Endothelial cell of umbilical vein (primary cell): ENCODE measurements at regions of chr7 and their contacts with region 1.

Region 1: GRCh38 chr7:128209229-128210035 is 31.6 kb upstream of the LEP start:
- DNase-seq: peak; percentile 77
- H3K4me3 ChIP-seq: no peak overlapping the region
- H3K27ac ChIP-seq: no peak overlapping the region
- H3K4me1 ChIP-seq: no peaks in the 10 kb centered on the region
- H3K27me3 ChIP-seq: peaks cover 10 to 24% of the 10 kb centered on the region in 2 experiments
- CTCF ChIP-seq: peak; percentile 93 to 97
- POLR2A ChIP-seq: no peak

Region 2: GRCh38 chr7:126803060-126803665 is 1406.3 kb before region 1 on chr7:
- CTCF ChIA-PET with region 1: interaction called, 17 read pairs
- POLR2A ChIA-PET with region 1: no interaction called
- dilution Hi-C with region 1: no loop called
- intact Hi-C with region 1: loop called (anchors 5 kb)
- DNase-seq: peak; percentile 65
- H3K4me3 ChIP-seq: no peak overlapping the region
- H3K27ac ChIP-seq: no peak overlapping the region
- H3K4me1 ChIP-seq: no peaks in the 10 kb centered on the region
- H3K27me3 ChIP-seq: no peaks in the 10 kb centered on the region
- CTCF ChIP-seq: peak; percentile 43
- POLR2A ChIP-seq: no peak

Region 3: DNA sequence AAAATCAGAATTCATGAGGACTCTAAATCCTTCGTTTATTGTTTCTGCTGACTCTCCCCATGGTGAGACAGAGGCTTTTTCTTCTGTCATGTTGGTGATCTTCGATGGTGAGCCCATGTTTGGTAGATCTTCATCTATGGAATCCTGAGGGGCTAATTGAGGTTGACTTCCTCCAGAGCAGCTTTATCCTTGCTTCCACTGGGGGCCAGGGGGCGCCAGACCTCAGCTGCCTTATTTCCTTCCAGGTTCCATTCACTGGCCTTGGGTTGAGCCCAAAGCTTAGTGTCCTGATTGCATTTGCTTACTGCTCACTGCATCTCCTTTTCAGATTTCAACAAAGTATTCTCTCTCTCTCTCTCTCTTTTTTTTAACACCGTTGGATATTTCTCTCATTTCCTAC is 704.7 kb before region 1 on chr7:
- CTCF ChIA-PET with region 1: interaction called, 91 read pairs
- POLR2A ChIA-PET with region 1: no interaction called
- dilution Hi-C with region 1: no loop called
- intact Hi-C with region 1: no loop called
- DNase-seq: peak; percentile 11
- H3K4me3 ChIP-seq: no peak overlapping the region
- H3K27ac ChIP-seq: no peak overlapping the region
- H3K4me1 ChIP-seq: no peaks in the 10 kb centered on the region
- H3K27me3 ChIP-seq: peaks cover 1 to 4% of the 10 kb centered on the region in 2 experiments
- CTCF ChIP-seq: peak; percentile 49 to 54
- POLR2A ChIP-seq: no peak

Region 4: GRCh38 chr7:127629268-127629854 is 580.1 kb before region 1 on chr7:
- CTCF ChIA-PET with region 1: interaction called, 10 read pairs
- POLR2A ChIA-PET with region 1: no interaction called
- dilution Hi-C with region 1: no loop called
- intact Hi-C with region 1: no loop called
- DNase-seq: no peak
- H3K4me3 ChIP-seq: no peak overlapping the region
- H3K27ac ChIP-seq: no peak overlapping the region
- H3K4me1 ChIP-seq: no peaks in the 10 kb centered on the region
- H3K27me3 ChIP-seq: peaks cover 6 to 19% of the 10 kb centered on the region in 2 experiments
- CTCF ChIP-seq: peak; percentile 26 to 36
- POLR2A ChIP-seq: no peak

Region 5: GRCh38 chr7:128031901-128032604 is 177.4 kb before region 1 on chr7:
- CTCF ChIA-PET with region 1: interaction called, 60 read pairs
- POLR2A ChIA-PET with region 1: no interaction called
- dilution Hi-C with region 1: no loop called
- intact Hi-C with region 1: loop called (anchors 1 kb)
- DNase-seq: peak; percentile 85
- H3K4me3 ChIP-seq: peak overlapping the region in 2 of 3 experiments; percentile 8 to 45
- H3K27ac ChIP-seq: no peak overlapping the region
- H3K4me1 ChIP-seq: peaks cover 6% of the 10 kb centered on the region
- H3K27me3 ChIP-seq: no peaks in the 10 kb centered on the region
- CTCF ChIP-seq: peak; percentile 16 to 37
- POLR2A ChIP-seq: no peak

Region 6: DNA sequence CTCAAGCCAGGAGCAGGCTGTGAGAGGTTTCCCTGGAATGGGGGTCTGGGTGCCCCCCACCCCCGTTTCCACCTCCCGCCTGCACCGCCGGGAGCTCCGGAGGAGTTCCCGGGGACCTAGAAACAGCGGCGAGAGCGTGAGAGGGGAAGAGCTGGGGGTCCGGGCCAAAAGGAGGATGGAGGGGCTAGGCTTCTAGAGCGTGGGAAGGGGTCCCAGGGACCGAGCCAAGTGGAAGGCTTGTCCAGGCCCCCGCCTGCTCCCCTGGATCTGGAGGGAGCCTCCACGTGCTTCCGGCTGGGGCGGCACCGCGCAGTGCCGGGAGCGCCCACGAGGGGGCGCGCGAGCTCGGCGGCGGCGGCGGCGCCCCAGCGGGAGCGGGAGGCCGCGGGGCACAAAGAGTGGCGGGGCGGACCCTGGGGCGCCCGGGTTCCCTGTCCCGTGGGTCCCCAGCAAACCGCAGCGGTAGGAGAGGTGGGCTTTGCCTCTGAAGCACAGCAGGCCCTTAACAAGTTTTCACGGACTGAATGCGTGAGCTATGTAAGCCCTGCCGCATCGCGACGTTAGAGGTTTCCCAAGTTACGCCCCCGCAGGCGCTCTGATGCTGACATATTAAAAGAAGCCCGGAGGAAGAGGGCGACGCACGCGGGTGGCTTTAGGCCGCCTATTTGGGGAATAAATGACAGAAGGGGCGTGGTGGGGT is 73.8 kb before region 1 on chr7:
- CTCF ChIA-PET with region 1: interaction called, 66 read pairs
- POLR2A ChIA-PET with region 1: no interaction called
- dilution Hi-C with region 1: no loop called
- intact Hi-C with region 1: loop called (anchors 1 kb)
- DNase-seq: peak; percentile 64
- H3K4me3 ChIP-seq: peak overlapping the region; percentile 34 to 62 (median 58)
- H3K27ac ChIP-seq: no peak overlapping the region
- H3K4me1 ChIP-seq: peaks cover 37% of the 10 kb centered on the region
- H3K27me3 ChIP-seq: peaks cover 17 to 34% of the 10 kb centered on the region in 2 experiments
- CTCF ChIP-seq: peak; percentile 75 to 93
- POLR2A ChIP-seq: no peak